Psoas muscle (tissue), 8 donors: ENCODE measurements at regions of chr3 and their contacts with region 1.

Region 1: DNA sequence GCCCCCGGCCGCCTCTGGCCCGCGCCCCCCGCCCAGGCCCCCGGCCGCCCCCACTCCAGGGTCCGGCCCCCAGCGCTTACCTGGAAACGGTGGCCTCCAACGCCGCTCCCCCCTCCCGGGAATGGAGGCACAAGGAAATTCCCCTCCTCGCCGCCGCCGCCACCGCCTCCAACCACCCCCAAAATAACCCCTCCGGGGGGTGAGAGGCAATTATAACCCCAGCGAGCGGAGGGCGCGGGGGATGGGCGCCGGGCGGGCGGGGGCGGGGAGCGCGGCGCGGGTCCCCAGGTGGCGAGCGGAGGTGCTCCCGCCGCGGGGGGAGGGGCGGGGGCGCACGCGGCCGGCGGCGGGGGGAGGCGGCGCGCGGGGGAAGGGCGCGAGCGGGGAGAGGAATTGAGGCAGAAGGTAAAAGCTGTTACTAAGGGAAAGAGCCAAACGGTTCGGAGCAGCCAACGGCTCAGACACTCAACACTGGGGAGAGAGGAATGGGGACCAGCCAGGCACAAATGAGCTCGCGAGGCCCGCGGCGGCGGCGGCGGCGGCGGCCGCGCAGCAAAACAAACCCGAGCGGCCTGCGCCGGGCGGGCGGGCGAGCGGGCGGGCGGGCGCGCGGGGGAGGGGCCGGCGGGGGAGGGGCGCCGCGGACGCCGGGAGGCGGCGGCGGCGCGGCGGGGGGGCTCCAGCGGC is at the start of gene TBL1XR1:
- DNase-seq: peak; percentile 91 to 96
- ATAC-seq: peak; percentile 87 to 90 (median 88)
- H3K4me3 ChIP-seq: peak within 1 kb of the TSS; percentile 89
- H3K27ac ChIP-seq: peak within 1 kb of the TSS; percentile 97
- H3K4me1 ChIP-seq: peaks cover 19% of the 10 kb centered on the region
- H3K27me3 ChIP-seq: no peaks in the 10 kb centered on the region
- CTCF ChIP-seq: no peak
- total RNA-seq, gene TBL1XR1: 58.6 to 97.4 (median 69.4) TPM

Region 2: DNA sequence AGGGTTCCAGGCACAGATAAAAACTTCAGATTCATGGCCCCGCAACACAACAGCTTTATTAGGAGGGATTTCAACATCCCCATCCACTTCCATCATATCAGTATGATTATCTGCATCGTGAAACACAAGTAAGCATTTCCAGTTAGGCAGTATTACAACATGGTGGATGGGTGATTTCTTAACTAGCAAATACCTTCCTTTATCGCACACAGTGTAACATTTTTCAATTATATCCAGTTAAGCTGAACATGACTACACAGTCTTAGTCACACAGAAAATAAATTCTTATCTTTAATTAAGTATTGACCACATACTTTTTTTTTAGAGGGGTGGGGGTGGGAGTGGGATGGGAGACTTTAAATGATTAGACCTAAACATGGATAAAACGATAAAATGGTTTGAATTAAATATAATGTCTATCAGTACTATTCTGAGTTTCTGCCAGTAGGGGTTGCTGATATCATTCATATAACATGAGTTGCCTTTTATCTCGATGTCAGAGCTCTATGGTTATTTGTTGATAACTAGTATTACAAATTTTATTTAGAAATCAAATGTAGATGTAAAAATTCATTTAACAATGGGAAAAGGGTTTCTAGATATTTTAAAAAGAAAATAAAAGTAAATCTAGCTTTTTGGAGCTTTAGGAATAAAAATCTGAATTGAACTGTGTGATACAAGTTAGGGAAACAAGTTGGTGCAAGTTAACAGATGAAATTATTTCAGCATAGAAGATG is 146.5 kb before region 1 on chr3:
- intact Hi-C with region 1: loop called (anchors 5 kb)
- DNase-seq: no peak
- ATAC-seq: peak; percentile 57 to 83 (median 68)
- H3K4me3 ChIP-seq: no peak overlapping the region
- H3K27ac ChIP-seq: no peak overlapping the region
- H3K4me1 ChIP-seq: peaks cover 5% of the 10 kb centered on the region
- H3K27me3 ChIP-seq: no peaks in the 10 kb centered on the region
- CTCF ChIP-seq: peak; percentile 65

Region 3: GRCh38 chr3:177157492-177157891 is 39.7 kb before region 1 on chr3:
- intact Hi-C with region 1: no loop called
- DNase-seq: no peak
- ATAC-seq: no peak
- H3K4me3 ChIP-seq: no peak overlapping the region
- H3K27ac ChIP-seq: no peak overlapping the region
- H3K4me1 ChIP-seq: no peaks in the 10 kb centered on the region
- H3K27me3 ChIP-seq: no peaks in the 10 kb centered on the region
- CTCF ChIP-seq: no peak

Region 4: DNA sequence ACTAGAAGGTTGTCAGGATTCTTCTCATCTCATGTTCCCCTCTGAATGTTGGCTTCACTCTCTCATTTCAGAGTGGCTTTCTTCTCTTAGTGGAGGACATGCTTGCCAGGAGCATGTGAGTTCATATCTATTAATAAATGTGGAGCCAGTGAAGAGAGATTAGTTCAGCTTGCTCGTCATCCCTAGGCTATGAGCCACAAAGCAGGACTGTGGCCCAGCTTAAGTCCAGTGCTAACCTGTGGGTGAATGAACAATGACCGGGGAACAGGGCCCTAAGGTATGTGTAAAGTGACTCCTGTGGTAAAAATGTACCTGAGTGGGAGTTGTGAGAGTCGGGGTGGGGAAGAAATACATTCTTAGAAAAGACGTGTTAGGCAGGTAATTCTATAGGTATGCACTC is 97.0 kb after region 1 on chr3:
- intact Hi-C with region 1: loop called (anchors 5 kb)
- DNase-seq: peak; percentile 53 to 70
- ATAC-seq: peak; percentile 96 to 99 (median 98)
- H3K4me3 ChIP-seq: no peak overlapping the region
- H3K27ac ChIP-seq: peak overlapping the region; percentile 83
- H3K4me1 ChIP-seq: peaks cover 11% of the 10 kb centered on the region
- H3K27me3 ChIP-seq: no peaks in the 10 kb centered on the region
- CTCF ChIP-seq: no peak

Region 5: GRCh38 chr3:177470187-177470941 is 273.2 kb after region 1 on chr3:
- intact Hi-C with region 1: loop called in 1 of 2 experiments (anchors 5 kb)
- DNase-seq: no peak
- ATAC-seq: no peak
- H3K4me3 ChIP-seq: no peak overlapping the region
- H3K27ac ChIP-seq: no peak overlapping the region
- H3K4me1 ChIP-seq: peaks cover 10% of the 10 kb centered on the region
- H3K27me3 ChIP-seq: no peaks in the 10 kb centered on the region
- CTCF ChIP-seq: no peak

Region 6: DNA sequence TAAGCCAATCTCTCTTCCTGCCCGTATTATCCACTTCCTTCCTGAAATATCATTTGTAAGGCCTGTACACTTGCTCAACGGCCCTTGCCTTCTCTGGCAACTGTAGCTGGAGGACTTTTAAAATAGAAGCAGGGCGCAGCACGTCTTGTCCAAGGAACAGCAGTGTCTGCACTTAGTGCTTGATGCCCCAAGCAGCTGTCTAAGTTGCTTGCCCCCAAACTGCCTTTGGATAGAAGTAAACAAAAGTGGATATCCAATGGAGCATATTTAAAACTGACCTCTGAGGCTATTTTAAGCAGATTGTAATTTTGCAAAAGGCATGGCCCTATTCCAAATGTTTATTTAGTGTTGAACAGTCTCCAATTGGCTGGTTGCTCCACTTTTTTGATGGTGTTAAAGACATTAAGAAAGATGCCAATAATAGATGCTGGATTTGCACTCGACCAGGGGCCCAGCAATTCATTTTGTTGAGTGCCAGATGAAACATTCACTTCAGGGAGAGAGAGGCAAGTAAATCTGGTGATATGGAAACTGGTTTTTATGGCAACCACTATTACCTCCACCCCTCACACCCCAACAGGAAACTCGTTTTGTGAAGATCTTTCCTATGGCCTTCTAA is 526.9 kb after region 1 on chr3:
- intact Hi-C with region 1: loop called in 1 of 2 experiments (anchors 10 kb)
- DNase-seq: peak; percentile 72 to 89
- ATAC-seq: peak; percentile 94 to 97 (median 96)
- H3K4me3 ChIP-seq: no peak overlapping the region
- H3K27ac ChIP-seq: peak overlapping the region; percentile 82
- H3K4me1 ChIP-seq: peaks cover 55% of the 10 kb centered on the region
- H3K27me3 ChIP-seq: no peaks in the 10 kb centered on the region
- CTCF ChIP-seq: no peak

Region 7: GRCh38 chr3:177777699-177778098 is 580.5 kb after region 1 on chr3:
- intact Hi-C with region 1: loop called in 1 of 2 experiments (anchors 10 kb)
- DNase-seq: peak; percentile 39 to 71
- ATAC-seq: peak; percentile 84 to 95 (median 89)
- H3K4me3 ChIP-seq: no peak overlapping the region
- H3K27ac ChIP-seq: no peak overlapping the region
- H3K4me1 ChIP-seq: peaks cover 16% of the 10 kb centered on the region
- H3K27me3 ChIP-seq: no peaks in the 10 kb centered on the region
- CTCF ChIP-seq: peak; percentile 77